MCF 10A (cell line): ENCODE measurements at regions of chr12 and their contacts with region 1.

Region 1: GRCh38 chr12:100266835-100267618 is at the starts of genes DEPDC4 and SCYL2:
- DNase-seq: peak; percentile 99
- H3K4me3 Mint-ChIP-seq: peak within 1 kb of the TSS; percentile 99
- H3K27ac Mint-ChIP-seq: peak within 1 kb of the TSS; percentile 99
- H3K4me1 Mint-ChIP-seq: peaks cover 13% of the 10 kb centered on the region
- H3K27me3 Mint-ChIP-seq: no peaks in the 10 kb centered on the region
- CTCF ChIP-seq: no peak
- total RNA-seq, gene DEPDC4: 0.52 and 1.4 TPM in 2 replicates
- total RNA-seq, gene SCYL2: 47.5 and 52.8 TPM in 2 replicates

Region 2: GRCh38 chr12:100200463-100201181 is 66.4 kb before region 1 on chr12 and contains the start of gene ACTR6:
- CTCF ChIA-PET with region 1: interaction called, 3 read pairs
- POLR2A ChIA-PET with region 1: interaction called, 17 read pairs
- intact Hi-C with region 1: no loop called
- DNase-seq: peak; percentile 96
- H3K4me3 Mint-ChIP-seq: peak within 1 kb of the TSS; percentile 99
- H3K27ac Mint-ChIP-seq: peak within 1 kb of the TSS; percentile 93
- H3K4me1 Mint-ChIP-seq: peaks cover 10% of the 10 kb centered on the region
- H3K27me3 Mint-ChIP-seq: no peaks in the 10 kb centered on the region
- CTCF ChIP-seq: no peak
- total RNA-seq, gene ACTR6: 26.4 and 28.8 TPM in 2 replicates

Region 3: GRCh38 chr12:100234598-100235304 is 32.3 kb before region 1 on chr12:
- CTCF ChIA-PET with region 1: interaction called, 7 read pairs
- POLR2A ChIA-PET with region 1: interaction called, 19 read pairs
- intact Hi-C with region 1: no loop called
- DNase-seq: peak; percentile 56
- H3K4me3 Mint-ChIP-seq: no peak overlapping the region
- H3K27ac Mint-ChIP-seq: no peak overlapping the region
- H3K4me1 Mint-ChIP-seq: peaks cover 6% of the 10 kb centered on the region
- H3K27me3 Mint-ChIP-seq: no peaks in the 10 kb centered on the region
- CTCF ChIP-seq: peak; percentile 60

Region 4: DNA sequence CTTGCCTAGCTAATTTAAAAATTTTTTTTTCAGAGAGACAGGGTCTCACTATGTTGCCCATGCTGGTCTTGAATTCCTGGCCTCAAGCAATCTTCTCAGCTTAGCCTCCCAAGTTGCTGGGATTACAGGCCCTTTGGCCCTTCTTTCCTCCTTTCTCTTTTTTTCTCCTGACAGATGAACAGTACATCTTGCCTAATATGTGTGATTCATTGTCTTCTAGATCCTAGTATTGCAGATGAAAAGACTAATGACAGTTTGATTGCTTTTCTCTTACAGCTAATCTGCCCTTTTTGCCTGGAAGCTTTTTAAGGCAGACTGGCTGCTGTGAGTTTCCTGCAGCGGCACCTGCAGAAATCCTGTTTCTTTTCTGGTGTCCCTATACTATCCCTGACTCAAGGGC is 12.2 kb before region 1 on chr12:
- CTCF ChIA-PET with region 1: no interaction called
- POLR2A ChIA-PET with region 1: interaction called, 15 read pairs
- intact Hi-C with region 1: no loop called
- DNase-seq: peak; percentile 10
- H3K4me3 Mint-ChIP-seq: no peak overlapping the region
- H3K27ac Mint-ChIP-seq: no peak overlapping the region
- H3K4me1 Mint-ChIP-seq: peaks cover 7% of the 10 kb centered on the region
- H3K27me3 Mint-ChIP-seq: no peaks in the 10 kb centered on the region
- CTCF ChIP-seq: no peak

Region 5: DNA sequence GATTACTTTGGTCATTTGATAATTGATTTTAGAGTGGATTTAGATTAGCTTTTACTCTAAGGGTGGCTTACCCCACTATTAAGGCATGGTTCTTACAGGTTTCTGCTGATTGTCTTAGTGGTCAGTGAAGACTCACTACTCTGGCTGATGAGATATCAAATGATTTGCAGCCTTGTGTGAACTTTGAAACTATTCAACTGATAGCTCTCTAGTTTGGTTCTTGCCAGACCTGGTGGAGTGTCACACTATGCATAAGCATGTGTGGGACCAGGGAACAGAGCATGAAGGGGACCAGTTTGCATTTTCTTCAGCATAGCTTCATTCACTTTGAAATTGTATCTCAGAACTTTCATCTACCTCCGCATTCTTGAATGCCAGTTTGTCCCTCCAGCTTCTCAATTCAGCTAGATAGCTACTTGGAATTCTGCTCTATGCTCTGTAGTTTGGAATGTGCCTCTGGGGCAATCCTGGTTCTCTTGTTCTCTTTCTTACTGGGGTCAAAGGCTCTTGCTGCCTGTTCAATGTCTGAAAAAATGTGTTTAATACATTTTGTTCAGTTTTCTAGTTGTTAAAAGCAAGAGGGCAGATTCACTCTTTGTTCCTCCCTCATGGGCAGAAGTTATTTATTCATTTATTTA is 12.7 kb after region 1 on chr12:
- CTCF ChIA-PET with region 1: interaction called, 3 read pairs
- POLR2A ChIA-PET with region 1: interaction called, 21 read pairs
- intact Hi-C with region 1: no loop called
- DNase-seq: no peak
- H3K4me3 Mint-ChIP-seq: no peak overlapping the region
- H3K27ac Mint-ChIP-seq: no peak overlapping the region
- H3K4me1 Mint-ChIP-seq: peaks cover 7% of the 10 kb centered on the region
- H3K27me3 Mint-ChIP-seq: no peaks in the 10 kb centered on the region
- CTCF ChIP-seq: no peak

Region 6: DNA sequence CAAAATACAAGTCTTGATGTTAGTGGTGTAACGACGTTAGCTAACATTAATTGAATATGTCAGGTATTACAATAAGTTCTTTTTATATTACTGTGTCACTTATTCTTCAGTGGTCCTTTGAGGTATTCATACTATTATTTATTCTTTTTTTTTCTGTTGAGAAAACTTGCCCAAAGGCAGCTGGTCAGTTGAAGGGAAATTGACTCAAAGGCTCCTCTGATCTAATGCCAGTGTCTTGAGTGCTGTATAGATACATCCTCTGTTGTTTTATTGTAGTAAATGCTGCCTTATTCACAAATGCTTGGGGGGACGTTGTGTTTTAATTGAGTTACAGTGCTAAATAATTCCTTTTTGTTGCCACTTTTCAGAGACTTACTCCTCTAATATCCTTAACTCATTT is 23.0 kb after region 1 on chr12:
- CTCF ChIA-PET with region 1: no interaction called
- POLR2A ChIA-PET with region 1: interaction called, 10 read pairs
- intact Hi-C with region 1: no loop called
- DNase-seq: no peak
- H3K4me3 Mint-ChIP-seq: no peak overlapping the region
- H3K27ac Mint-ChIP-seq: no peak overlapping the region
- H3K4me1 Mint-ChIP-seq: no peaks in the 10 kb centered on the region
- H3K27me3 Mint-ChIP-seq: no peaks in the 10 kb centered on the region
- CTCF ChIP-seq: no peak

Region 7: DNA sequence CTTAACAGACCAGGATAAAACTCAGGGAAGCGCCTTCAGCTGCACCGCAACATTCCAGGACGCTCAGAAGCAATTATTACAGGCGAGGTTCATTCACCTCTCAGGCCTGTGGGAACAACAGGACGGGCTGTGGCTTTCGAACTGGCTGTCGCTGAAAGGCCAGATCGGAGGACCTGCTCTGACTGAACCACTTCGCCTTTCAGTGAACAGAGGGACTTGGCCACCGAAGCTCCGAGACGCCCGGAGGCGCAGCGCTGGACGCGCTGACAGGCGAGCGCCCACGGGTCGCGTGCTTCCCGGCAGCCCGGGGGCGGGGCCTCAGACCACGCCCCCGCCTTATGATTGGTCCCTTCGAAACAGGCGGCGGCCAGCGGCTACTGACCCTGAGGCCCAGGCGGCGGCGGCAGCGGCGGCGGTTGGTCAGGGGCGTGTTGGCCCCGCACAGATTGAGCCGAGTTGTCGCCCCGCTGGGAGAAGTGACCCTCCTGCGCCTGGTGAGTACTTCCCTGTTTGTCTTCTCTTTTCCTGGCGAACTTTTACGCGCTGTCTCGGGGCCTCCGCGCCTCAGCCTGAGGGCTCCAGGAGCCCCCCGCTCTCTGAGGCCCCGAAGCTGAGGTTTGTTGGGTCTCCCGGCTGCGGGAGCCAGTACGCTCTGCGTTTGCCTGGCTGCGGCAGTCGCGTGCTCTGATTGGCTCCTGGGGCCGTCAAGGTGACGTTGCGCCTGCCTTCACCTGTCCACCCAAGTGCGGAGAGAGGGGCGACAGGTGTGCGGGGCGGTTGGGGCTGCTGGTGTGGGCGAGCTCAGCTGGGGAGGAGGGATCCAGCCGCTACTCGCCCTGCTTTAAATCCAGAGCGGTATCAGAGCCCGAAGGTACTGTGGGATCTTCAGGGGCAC is 306.5 kb after region 1 on chr12 and contains the start of gene GAS2L3:
- CTCF ChIA-PET with region 1: no interaction called
- POLR2A ChIA-PET with region 1: interaction called, 3 read pairs
- intact Hi-C with region 1: loop called (anchors 1 kb)
- DNase-seq: peak; percentile 91
- H3K4me3 Mint-ChIP-seq: peak within 1 kb of the TSS; percentile 92
- H3K27ac Mint-ChIP-seq: peak within 1 kb of the TSS; percentile 88
- H3K4me1 Mint-ChIP-seq: peaks cover 6% of the 10 kb centered on the region
- H3K27me3 Mint-ChIP-seq: no peaks in the 10 kb centered on the region
- CTCF ChIP-seq: no peak
- total RNA-seq, gene GAS2L3: 29.9 and 32.6 TPM in 2 replicates